ENCODE measurements at regions of chr10 and their contacts with region 1.

Region 1: DNA sequence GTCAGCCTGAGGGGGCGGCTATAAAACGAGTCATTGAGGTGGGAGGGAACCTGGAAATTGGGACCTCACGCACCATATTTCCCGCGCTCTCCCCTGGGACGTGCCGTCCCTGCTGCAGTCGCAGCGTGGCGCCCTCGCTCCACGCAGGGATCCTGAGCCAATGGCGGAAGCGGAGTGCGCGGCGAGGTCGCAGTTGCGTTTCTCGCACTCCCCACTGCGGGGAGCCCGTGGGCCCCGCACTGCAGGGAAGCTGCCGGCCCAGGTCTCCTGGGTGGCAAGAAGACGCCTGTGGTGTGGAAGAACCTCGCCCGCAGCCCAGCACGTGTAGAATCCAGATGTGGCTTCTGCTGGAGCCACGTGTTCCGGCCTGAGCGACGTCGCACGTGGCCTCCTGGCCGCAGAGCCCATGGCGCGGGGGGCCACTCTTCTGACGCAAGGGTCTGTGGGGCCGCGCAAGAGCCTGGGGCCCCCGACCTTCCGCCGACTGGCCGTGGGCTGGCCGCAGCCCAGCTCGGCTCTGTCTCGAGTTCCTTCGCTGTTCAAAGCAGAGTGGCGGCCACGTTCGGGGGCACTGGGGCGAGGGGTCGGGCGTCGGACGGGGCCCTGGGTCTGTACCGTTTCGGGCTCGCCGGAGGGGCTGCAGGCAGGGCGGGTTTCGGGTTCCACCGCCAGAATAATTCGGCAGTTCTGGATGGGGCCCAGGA is 26.4 kb downstream of the HIF1AN start:
- DNase-seq: peak; percentile 71 to 79 (median 72)
- ATAC-seq: peak; percentile 93
- H3K4me3 ChIP-seq: no peak overlapping the region
- H3K27ac ChIP-seq: no peak overlapping the region
- H3K4me1 ChIP-seq: peaks cover 3 to 12% of the 10 kb centered on the region in 2 experiments; a peak in 2 of 5 replicates
- H3K27me3 ChIP-seq: peaks cover 0 to 10% of the 10 kb centered on the region in 2 experiments; a peak in 1 of 5 replicates
- CTCF ChIP-seq: peak; percentile 83 to 99 (median 96)
- EP300 ChIP-seq: no peak
- POLR2A ChIP-seq: no peak
- RAD21 ChIP-seq: peak; percentile 62 to 77

Region 2: DNA sequence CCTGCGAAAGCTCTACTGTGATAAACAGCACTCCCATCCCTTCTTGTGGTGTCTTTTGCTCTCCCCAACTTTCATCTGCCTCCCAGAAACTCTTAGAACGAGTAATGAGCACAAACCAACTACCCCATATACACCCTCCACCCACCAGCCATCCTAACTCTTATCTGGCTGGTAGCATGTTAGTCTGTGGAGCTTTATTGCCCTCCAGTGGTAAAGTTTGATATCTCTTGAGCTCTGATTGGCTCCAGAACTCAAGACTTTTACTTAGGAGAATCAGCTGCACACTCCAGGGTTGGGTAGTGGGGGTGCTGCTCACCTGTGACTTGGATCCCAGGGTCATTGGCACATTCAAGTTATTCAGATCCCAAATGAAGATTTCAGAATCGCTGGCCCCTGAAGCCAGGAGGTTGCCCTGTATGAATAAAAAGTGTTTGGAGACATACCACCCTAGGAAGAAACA is 53.4 kb before region 1 on chr10:
- CTCF ChIA-PET with region 1: no interaction called
- POLR2A ChIA-PET with region 1: no interaction called
- in situ Hi-C with region 1: no loop called
- intact Hi-C with region 1: no loop called
- DNase-seq: peak; percentile 48 to 65 (median 62)
- ATAC-seq: peak; percentile 98
- H3K4me3 ChIP-seq: no peak overlapping the region
- H3K27ac ChIP-seq: no peak overlapping the region
- H3K4me1 ChIP-seq: peaks cover 0 to 4% of the 10 kb centered on the region in 2 experiments; a peak in 2 of 5 replicates
- H3K27me3 ChIP-seq: no peaks in the 10 kb centered on the region
- CTCF ChIP-seq: peak; percentile 67 to 78 (median 74)
- EP300 ChIP-seq: no peak
- POLR2A ChIP-seq: no peak
- RAD21 ChIP-seq: peak; percentile 65 to 80

Region 3: DNA sequence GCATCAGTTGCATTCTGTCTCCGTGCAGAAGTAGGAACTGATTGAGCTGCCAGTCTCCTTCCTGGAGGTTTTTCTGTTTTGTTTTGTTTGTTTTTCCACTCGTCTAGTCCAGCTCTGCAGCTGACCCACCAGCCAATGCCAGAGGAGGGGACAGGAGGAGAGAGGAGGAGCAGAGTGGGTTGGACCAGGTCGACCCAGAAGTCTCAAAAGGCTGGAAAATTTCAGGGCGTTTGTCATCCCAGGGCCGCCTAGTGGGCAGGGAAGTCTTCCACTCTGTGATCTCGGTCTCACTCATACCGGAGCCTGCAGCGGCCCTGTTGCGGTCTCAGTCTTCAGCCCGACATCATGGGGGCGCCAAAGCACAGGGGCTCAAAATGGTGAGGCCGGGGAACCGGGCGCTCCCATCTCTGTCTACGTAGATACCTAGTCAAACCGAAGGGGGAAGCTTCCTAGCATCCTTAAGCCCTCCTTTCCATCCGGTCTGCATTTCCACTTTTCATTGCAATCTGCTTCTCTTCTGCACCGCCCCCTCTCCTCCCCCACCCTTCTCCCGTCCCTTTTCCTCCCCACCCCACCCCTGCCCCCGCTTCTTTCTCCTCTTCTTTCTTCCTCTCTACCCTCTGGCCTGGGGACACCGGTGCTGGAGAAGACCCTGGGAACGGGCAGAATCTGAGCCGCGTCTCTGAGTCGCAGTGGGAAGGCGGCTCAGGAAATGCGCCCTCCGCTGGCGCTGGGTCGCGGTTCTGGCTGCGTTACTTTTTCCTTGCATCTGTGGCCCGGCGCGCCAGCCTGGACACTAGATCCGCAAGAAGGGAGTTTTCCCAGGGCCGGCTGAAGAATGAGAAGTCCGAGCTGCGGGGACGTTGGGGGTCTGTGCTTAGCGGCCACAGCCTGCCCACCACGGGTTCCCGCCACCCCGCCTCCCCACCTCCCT is 167.0 kb after region 1 on chr10:
- CTCF ChIA-PET with region 1: no interaction called
- POLR2A ChIA-PET with region 1: no interaction called
- in situ Hi-C with region 1: no loop called
- intact Hi-C with region 1: loop called (anchors 5 kb)
- DNase-seq: peak; percentile 45 to 57 (median 51)
- ATAC-seq: peak; percentile 92
- H3K4me3 ChIP-seq: no peak overlapping the region
- H3K27ac ChIP-seq: no peak overlapping the region
- H3K4me1 ChIP-seq: peaks cover 0 to 16% of the 10 kb centered on the region in 2 experiments; a peak in 2 of 5 replicates
- H3K27me3 ChIP-seq: peaks cover 12 to 46% of the 10 kb centered on the region in 2 experiments
- CTCF ChIP-seq: peak; percentile 45 to 71 (median 51); a peak in 4 of 6 replicates
- EP300 ChIP-seq: no peak
- POLR2A ChIP-seq: no peak
- RAD21 ChIP-seq: peak in 1 of 2 experiments; percentile 36; a peak in 2 of 4 replicates

Region 4: DNA sequence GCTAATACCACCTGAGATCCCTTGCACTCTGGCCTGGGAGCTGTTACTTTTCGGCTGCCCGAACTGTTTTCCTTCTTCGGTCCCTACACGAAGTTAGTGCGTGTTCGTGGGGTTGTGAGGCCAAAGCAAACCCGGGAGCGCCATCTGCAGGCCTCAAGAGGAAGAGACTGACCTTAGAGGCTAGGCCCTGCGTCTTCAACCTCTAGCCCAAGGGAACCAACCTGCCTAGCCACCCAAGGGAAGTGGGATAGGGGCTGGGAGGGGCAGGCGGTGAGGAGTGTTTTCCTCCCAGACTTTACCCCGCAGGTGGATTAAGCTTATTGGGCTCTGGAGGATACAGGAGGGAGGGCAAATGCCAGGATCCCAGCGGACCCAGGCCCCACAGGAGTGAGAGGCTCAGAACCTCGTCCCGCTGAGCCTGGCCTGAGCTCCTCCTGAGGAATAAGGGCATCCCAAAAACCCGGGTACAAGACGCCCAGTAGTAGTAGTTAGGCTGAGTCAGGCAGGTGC is 181.5 kb after region 1 on chr10:
- CTCF ChIA-PET with region 1: interaction called, 16 read pairs
- POLR2A ChIA-PET with region 1: no interaction called
- in situ Hi-C with region 1: loop called (anchors 5 kb)
- intact Hi-C with region 1: loop called (anchors 2 kb)
- DNase-seq: peak; percentile 64 to 70 (median 66)
- ATAC-seq: peak; percentile 90
- H3K4me3 ChIP-seq: no peak overlapping the region
- H3K27ac ChIP-seq: no peak overlapping the region
- H3K4me1 ChIP-seq: peaks cover 0 to 29% of the 10 kb centered on the region in 2 experiments; a peak in 2 of 5 replicates
- H3K27me3 ChIP-seq: peaks cover 19 to 75% of the 10 kb centered on the region in 2 experiments; a peak in 4 of 5 replicates
- CTCF ChIP-seq: peak; percentile 70 to 78 (median 72)
- EP300 ChIP-seq: no peak
- POLR2A ChIP-seq: no peak
- RAD21 ChIP-seq: peak; percentile 57 to 76

Region 5: GRCh38 chr10:100872034-100872791 is 310.1 kb after region 1 on chr10:
- CTCF ChIA-PET with region 1: interaction called, 6 read pairs
- POLR2A ChIA-PET with region 1: no interaction called
- in situ Hi-C with region 1: loop called (anchors 25 kb)
- intact Hi-C with region 1: no loop called
- DNase-seq: peak; percentile 68 to 83 (median 78)
- ATAC-seq: peak; percentile 98
- H3K4me3 ChIP-seq: no peak overlapping the region
- H3K27ac ChIP-seq: no peak overlapping the region
- H3K4me1 ChIP-seq: no peaks in the 10 kb centered on the region; a peak in 1 of 5 replicates
- H3K27me3 ChIP-seq: peaks cover 2 to 39% of the 10 kb centered on the region in 2 experiments; a peak in 4 of 5 replicates
- CTCF ChIP-seq: peak; percentile 63 to 76 (median 72)
- EP300 ChIP-seq: no peak
- POLR2A ChIP-seq: no peak
- RAD21 ChIP-seq: peak; percentile 38 to 73

Measured in K562 (cell line).